Caco-2 (cell line): ENCODE measurements at regions of chr6 and their contacts with region 1.

Region 1: DNA sequence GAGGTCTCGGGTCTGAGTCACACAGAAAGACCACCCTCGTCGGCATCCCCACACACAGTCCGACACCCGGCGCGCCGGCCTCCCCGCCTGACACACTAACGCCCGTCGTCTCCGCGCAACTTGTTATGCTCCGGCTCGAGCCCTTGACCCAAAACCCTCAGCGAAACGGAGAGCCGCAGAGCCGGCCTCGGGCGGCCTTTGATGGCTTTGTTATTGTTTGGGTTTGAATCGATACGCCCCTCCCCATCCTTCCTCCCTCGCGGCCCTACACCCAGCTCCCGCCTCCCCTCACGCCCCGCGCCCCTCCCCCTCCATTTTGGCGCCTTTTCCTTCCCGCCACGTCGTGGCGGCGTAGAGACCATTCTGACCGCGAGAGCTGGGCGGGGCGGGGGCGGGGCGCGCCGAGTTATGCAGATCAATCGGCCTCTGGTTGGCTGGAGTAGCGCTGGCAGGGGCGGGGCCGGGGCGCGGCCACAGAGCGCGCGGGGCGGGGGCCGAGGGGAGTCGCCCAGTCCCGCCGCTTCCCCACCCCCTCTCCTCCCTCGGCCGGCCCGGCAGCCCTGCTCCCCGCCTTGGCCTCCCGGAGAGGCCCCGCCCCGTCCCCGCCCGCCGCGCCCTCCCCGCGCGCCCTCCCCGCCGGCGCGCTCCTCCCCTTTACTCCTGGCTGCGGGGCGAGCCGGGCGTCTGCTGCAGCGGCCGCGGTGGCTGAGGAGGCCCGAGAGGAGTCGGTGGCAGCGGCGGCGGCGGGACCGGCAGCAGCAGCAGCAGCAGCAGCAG is at the start of gene PIM1:
- DNase-seq: peak; percentile 97 to 99
- H3K4me3 ChIP-seq: peak within 1 kb of the TSS; percentile 82
- H3K4me3 Mint-ChIP-seq: peak within 1 kb of the TSS; percentile 88
- H3K27ac Mint-ChIP-seq: peak within 1 kb of the TSS; percentile 98
- H3K4me1 ChIP-seq: peaks cover 10% of the 10 kb centered on the region; the same call in 1 of the 2 replicates
- H3K4me1 Mint-ChIP-seq: peaks cover 14% of the 10 kb centered on the region
- H3K27me3 ChIP-seq: no peaks in the 10 kb centered on the region
- H3K27me3 Mint-ChIP-seq: no peaks in the 10 kb centered on the region
- CTCF ChIP-seq: no peak
- total RNA-seq, gene PIM1: 43.8 and 48.3 TPM in 2 replicates

Region 2: DNA sequence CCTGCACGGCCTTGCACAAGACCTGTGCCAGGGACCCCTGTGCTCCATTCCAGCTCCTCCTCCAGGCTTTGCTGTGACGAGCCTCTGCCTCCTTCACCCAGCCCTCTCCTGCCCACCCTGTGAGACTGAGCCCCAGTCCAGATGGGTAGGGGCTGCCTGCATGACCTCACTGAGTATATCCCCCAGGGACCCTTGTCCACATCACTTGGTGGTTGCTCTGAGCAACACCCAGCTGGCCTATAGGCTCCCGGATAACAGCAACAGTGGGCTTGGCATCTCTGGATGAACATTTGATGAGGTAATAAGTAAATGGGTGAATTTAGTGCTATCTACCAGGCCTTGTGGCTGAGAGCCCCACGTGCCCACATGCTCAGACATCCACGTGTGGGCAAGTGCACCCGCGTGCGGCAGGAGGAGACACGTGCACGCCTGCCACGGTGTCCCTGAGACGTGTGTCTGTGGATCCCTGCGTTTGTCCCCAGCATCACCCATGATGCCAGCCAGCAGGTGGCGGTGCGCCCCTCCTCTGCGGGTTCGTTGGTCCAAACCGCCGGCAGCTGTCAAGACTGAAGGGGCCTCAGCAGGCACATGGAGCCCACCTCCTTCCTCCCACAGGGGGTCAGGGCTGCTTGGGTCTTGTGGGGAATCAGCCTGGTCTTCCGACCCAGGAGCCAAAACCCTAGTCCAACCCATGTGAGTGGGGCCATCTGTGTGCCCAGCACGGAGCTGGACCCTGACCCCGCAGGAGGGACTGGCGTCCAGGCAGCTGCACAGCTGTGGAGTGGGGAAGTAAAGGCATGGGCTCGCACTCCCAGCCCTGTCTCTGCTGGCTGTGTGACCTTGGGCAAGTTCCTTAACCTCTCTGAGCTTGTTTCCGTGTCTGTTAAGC is 118.3 kb before region 1 on chr6:
- CTCF ChIA-PET with region 1: interaction called, 19 read pairs
- POLR2A ChIA-PET with region 1: no interaction called
- intact Hi-C with region 1: loop called (anchors 1 kb)
- DNase-seq: peak; percentile 81 to 91
- H3K4me3 ChIP-seq: no peak overlapping the region
- H3K4me3 Mint-ChIP-seq: no peak overlapping the region
- H3K27ac Mint-ChIP-seq: no peak overlapping the region
- H3K4me1 ChIP-seq: peaks cover 14% of the 10 kb centered on the region
- H3K4me1 Mint-ChIP-seq: peaks cover 7% of the 10 kb centered on the region
- H3K27me3 ChIP-seq: no peaks in the 10 kb centered on the region
- H3K27me3 Mint-ChIP-seq: no peaks in the 10 kb centered on the region
- CTCF ChIP-seq: peak; percentile 86 to 93

Region 3: DNA sequence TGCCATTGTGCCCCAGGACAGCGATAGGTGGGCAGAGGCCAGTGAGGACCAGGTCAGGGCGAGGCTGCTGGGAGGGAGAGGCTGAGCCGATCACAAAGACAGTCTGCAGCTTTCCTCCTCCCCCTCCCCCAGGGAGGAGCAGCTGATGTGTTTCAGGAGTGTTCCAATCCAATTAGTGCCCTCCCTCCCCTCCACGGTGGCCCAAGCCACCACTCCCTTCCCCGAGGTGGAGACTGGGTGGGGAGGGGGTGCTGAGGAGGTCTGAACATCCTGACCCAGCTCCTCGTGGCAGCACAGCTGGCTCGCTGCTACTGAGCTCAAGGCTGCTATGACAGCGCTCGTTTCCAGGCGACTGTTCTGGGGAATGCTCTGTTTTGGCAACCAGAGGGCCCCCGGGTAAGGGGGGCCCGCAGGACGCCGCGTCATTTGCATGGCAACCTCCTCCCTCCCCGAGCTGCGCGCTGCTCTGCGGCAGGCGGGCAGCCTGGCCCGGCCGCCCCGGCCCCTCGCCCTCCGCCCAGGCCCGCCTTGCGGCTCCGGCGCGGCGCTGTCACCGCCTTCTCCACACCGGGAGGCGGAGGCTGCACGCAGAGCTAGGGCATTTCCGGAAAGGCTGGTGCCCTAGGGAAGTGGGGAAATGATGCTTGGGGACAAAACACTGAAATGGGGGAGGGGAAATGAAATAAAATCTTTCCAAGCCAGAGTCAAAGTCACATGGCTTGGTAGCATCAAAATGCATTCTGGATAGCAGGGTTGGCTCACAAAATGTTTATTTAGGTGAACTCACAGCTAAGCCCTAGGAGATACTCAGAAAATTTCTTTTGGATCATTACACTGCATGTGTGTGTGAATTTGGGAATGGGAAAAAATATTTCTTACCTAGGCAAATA is 67.2 kb before region 1 on chr6:
- CTCF ChIA-PET with region 1: interaction called, 5 read pairs
- POLR2A ChIA-PET with region 1: interaction called, 20 read pairs
- intact Hi-C with region 1: loop called (anchors 1 kb)
- DNase-seq: peak; percentile 84 to 88
- H3K4me3 ChIP-seq: peak overlapping the region; percentile 16
- H3K4me3 Mint-ChIP-seq: peak overlapping the region; percentile 82
- H3K27ac Mint-ChIP-seq: peak overlapping the region; percentile 92
- H3K4me1 ChIP-seq: peaks cover 53% of the 10 kb centered on the region
- H3K4me1 Mint-ChIP-seq: peaks cover 26% of the 10 kb centered on the region
- H3K27me3 ChIP-seq: no peaks in the 10 kb centered on the region
- H3K27me3 Mint-ChIP-seq: no peaks in the 10 kb centered on the region
- CTCF ChIP-seq: no peak

Region 4: GRCh38 chr6:37127961-37128862 is 41.5 kb before region 1 on chr6:
- CTCF ChIA-PET with region 1: interaction called, 13 read pairs
- POLR2A ChIA-PET with region 1: interaction called, 28 read pairs
- intact Hi-C with region 1: loop called (anchors 1 kb)
- DNase-seq: peak; percentile 82 to 88
- H3K4me3 ChIP-seq: no peak overlapping the region
- H3K4me3 Mint-ChIP-seq: peak overlapping the region; percentile 77
- H3K27ac Mint-ChIP-seq: peak overlapping the region; percentile 97
- H3K4me1 ChIP-seq: peaks cover 66% of the 10 kb centered on the region
- H3K4me1 Mint-ChIP-seq: peaks cover 50% of the 10 kb centered on the region
- H3K27me3 ChIP-seq: no peaks in the 10 kb centered on the region
- H3K27me3 Mint-ChIP-seq: no peaks in the 10 kb centered on the region
- CTCF ChIP-seq: no peak

Region 5: GRCh38 chr6:37149745-37150144 is 19.9 kb before region 1 on chr6:
- CTCF ChIA-PET with region 1: interaction called, 7 read pairs
- POLR2A ChIA-PET with region 1: interaction called, 4 read pairs
- intact Hi-C with region 1: loop called (anchors 1 kb)
- DNase-seq: no peak
- H3K4me3 ChIP-seq: no peak overlapping the region
- H3K4me3 Mint-ChIP-seq: no peak overlapping the region
- H3K27ac Mint-ChIP-seq: no peak overlapping the region
- H3K4me1 ChIP-seq: peaks cover 44% of the 10 kb centered on the region
- H3K4me1 Mint-ChIP-seq: peaks cover 19% of the 10 kb centered on the region
- H3K27me3 ChIP-seq: no peaks in the 10 kb centered on the region
- H3K27me3 Mint-ChIP-seq: no peaks in the 10 kb centered on the region
- CTCF ChIP-seq: no peak

Region 6: DNA sequence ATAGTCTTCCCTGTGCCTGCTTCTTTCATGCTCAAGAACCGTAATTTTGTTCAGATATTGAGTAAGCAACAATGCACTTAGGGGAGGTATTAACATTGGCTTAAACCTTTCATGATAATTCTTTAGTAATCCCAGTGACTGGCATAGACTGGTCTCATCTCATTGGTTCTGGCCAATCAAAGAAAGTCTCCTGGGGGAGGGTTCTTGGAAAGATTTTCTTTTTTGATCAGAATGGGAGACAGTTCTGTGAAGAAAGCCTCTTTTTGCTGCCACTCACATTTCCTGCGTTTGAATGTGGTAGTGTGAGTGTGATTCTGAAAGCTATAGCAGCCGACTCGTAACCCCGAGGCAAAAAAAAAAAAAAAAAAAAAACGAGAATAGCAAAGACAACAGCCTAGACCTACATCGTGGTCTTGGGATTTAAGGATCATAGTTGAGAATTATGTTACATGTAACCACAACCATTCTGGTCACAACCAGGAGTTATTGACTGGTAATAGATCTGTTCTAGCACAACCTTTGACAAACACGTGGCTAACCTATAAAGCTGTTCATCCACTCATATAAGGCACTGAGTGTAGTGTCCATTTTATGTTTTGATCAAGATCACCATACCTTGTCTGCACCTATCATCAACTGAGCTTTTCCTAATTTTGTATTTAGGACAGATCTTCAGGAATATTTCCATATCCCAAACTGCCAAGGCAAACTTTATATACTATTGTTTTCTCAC is 103.3 kb after region 1 on chr6:
- CTCF ChIA-PET with region 1: no interaction called
- POLR2A ChIA-PET with region 1: no interaction called
- intact Hi-C with region 1: no loop called
- DNase-seq: no peak
- H3K4me3 ChIP-seq: no peak overlapping the region
- H3K4me3 Mint-ChIP-seq: no peak overlapping the region
- H3K27ac Mint-ChIP-seq: no peak overlapping the region
- H3K4me1 ChIP-seq: no peaks in the 10 kb centered on the region
- H3K4me1 Mint-ChIP-seq: no peaks in the 10 kb centered on the region
- H3K27me3 ChIP-seq: no peaks in the 10 kb centered on the region
- H3K27me3 Mint-ChIP-seq: no peaks in the 10 kb centered on the region
- CTCF ChIP-seq: no peak